ENCODE measurements at regions of chr1 and their contacts with region 1.

Region 1: DNA sequence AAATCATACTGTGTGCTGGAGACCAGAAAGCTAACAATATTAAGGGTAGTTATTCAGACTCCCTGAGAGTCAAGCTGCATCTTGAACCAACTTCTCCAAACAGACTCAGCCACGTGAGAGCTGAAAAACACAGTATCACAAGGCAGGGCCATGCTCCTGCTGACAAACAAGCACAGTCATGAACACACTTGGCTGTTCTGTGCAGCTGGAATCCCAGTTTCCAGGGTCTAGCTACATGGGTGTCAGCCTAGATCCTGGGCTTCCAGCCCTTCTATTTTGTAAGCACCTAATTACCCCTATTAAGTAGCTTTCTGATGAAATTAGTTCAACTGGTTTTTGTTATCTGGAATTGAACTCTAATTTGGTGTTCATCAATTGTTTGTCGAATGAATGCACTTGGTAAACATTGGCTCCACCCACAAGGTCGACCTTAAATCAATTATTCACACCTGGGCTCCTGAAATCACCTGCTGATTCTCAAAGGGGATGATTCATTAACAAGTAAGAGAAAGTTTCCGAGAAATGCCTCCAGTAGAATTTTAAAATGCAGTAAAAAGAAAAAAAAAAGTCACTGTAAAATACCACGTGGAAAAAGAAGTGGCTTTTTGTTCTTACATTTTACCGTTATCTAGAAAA is 179.3 kb downstream of the ZC3H11B start:
- DNase-seq: no peak
- H3K4me3 Mint-ChIP-seq: no peak overlapping the region
- H3K27ac Mint-ChIP-seq: no peak overlapping the region
- H3K4me1 Mint-ChIP-seq: no peaks in the 10 kb centered on the region
- H3K27me3 Mint-ChIP-seq: no peaks in the 10 kb centered on the region

Region 2: DNA sequence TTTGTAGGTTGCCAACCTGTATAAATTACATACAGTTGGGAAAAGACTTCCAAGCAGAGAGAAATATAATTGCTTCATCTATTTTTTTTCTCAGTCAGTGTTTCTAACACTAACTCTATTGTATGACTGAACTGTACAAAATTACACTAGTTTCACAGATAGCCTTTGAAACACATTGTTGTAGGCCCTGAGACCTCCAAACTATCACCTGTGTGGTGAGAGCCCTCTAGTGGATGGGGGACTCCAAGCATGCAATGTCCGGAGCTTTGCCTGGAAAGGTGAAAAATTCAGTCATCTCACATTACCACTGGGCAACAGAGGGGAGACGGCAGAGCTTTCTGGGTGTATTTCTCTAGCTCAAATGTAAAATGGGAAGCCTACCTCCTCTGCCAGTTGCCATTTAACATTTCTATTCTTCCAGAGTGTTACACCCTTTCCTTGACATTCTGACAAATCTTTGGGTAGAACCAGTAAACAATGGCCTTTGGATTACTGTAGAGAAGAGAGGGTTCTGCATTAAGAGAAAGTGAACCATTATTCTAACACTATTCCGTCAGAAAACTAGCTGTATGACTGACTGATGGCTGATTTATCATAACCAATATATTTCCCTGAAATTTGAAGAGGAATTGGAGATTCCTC is 47.7 kb before region 1 on chr1:
- intact Hi-C with region 1: no loop called
- DNase-seq: peak; percentile 58
- H3K4me3 Mint-ChIP-seq: no peak overlapping the region
- H3K27ac Mint-ChIP-seq: no peak overlapping the region
- H3K4me1 Mint-ChIP-seq: no peaks in the 10 kb centered on the region
- H3K27me3 Mint-ChIP-seq: no peaks in the 10 kb centered on the region

Region 3: DNA sequence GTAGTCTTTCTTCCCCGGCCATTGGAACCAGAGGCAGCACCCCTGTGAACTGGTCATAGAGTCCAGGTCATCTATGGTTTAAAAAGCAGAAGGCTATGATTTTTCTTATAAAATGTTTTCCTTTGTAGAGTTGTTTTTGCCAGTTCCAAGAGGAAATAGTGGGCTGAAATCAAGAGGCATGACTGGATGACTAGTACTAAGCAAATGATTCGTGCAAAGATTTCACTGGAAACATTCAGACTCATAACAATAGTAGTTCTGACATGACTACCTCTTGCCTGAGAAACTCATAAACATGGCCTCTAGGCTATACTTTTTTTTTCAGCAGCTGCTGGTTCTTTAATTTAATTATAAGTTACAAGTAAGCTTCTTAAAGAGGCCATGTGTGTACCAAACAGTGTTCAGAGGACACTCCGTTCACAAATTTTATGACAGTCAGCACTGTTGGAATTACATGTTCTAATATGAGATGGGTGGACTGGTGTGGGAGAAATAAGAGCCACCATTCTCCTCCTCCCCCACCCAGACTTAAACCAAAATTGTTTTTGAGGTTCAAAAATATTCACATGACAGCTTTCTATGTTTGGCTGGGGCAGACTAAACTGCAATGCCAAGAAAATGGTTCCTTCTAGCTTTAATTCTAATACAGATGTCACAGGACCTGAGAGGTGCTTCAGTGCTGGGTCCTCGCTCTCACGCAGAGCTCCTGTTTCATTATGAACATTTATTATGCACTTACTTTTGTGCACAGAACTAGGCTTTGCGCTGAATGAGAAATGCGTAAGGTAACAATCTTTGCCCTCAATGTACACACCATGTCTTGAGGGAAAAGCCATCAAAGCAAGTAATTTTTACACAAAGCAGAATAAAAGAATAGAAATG is 31.8 kb after region 1 on chr1:
- intact Hi-C with region 1: loop called (anchors 5 kb)
- DNase-seq: no peak
- H3K4me3 Mint-ChIP-seq: no peak overlapping the region
- H3K27ac Mint-ChIP-seq: peak overlapping the region; percentile 80
- H3K4me1 Mint-ChIP-seq: peaks cover 9% of the 10 kb centered on the region
- H3K27me3 Mint-ChIP-seq: no peaks in the 10 kb centered on the region